CD4-positive, alpha-beta T cell (primary cell): ENCODE measurements at regions of chr6 and their contacts with region 1.

Region 1: GRCh38 chr6:27893059-27893835 is 18.9 kb downstream of the OR2B2 start:
- DNase-seq: peak; percentile 76 to 98 (median 85)
- ATAC-seq: peak; percentile 73
- H3K4me3 ChIP-seq: peak overlapping the region; percentile 74
- H3K4me3 Mint-ChIP-seq: no peak overlapping the region
- H3K27ac ChIP-seq: peak overlapping the region; percentile 84 to 86
- H3K27ac Mint-ChIP-seq: no peak overlapping the region
- H3K4me1 ChIP-seq: peaks cover 49% of the 10 kb centered on the region
- H3K4me1 Mint-ChIP-seq: peaks cover 29% of the 10 kb centered on the region
- H3K27me3 ChIP-seq: no peaks in the 10 kb centered on the region
- H3K27me3 Mint-ChIP-seq: no peaks in the 10 kb centered on the region
- CTCF ChIP-seq: no peak

Region 2: DNA sequence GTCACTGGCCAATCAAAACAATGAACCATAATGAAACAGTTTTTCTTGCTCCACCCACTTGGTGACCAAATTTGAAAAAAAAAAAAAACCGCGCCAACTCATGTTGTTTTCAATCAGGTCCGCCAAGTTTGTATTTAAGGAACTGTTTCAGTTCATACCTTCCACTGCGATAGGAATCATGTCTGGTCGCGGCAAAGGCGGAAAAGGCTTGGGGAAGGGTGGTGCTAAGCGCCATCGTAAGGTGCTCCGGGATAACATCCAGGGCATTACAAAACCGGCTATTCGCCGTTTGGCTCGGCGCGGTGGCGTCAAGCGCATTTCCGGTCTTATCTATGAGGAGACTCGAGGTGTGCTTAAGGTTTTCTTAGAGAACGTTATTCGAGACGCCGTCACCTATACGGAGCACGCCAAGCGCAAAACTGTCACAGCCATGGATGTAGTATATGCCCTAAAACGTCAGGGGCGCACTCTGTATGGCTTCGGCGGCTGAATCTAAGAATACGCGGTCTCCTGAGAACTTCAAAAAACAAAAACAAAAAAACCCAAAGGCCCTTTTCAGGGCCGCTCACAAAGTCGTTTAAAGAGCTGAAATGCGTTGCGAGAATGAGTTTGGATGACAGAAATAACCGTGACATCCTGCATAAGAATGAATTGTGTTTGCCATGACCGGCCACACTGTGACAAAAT is 1789.3 kb before region 1 on chr6:
- CTCF ChIA-PET with region 1: no interaction called
- POLR2A ChIA-PET with region 1: interaction called, 13 read pairs
- intact Hi-C with region 1: no loop called
- DNase-seq: peak; percentile 84 to 96 (median 90)
- ATAC-seq: peak; percentile 88
- H3K4me3 ChIP-seq: peak overlapping the region; percentile 58
- H3K4me3 Mint-ChIP-seq: peak overlapping the region; percentile 94
- H3K27ac ChIP-seq: peak overlapping the region; percentile 83 to 85
- H3K27ac Mint-ChIP-seq: peak overlapping the region; percentile 99
- H3K4me1 ChIP-seq: peaks cover 16% of the 10 kb centered on the region
- H3K4me1 Mint-ChIP-seq: peaks cover 13% of the 10 kb centered on the region
- H3K27me3 ChIP-seq: no peaks in the 10 kb centered on the region
- H3K27me3 Mint-ChIP-seq: peaks cover 5% of the 10 kb centered on the region
- CTCF ChIP-seq: peak; percentile 58

Region 3: DNA sequence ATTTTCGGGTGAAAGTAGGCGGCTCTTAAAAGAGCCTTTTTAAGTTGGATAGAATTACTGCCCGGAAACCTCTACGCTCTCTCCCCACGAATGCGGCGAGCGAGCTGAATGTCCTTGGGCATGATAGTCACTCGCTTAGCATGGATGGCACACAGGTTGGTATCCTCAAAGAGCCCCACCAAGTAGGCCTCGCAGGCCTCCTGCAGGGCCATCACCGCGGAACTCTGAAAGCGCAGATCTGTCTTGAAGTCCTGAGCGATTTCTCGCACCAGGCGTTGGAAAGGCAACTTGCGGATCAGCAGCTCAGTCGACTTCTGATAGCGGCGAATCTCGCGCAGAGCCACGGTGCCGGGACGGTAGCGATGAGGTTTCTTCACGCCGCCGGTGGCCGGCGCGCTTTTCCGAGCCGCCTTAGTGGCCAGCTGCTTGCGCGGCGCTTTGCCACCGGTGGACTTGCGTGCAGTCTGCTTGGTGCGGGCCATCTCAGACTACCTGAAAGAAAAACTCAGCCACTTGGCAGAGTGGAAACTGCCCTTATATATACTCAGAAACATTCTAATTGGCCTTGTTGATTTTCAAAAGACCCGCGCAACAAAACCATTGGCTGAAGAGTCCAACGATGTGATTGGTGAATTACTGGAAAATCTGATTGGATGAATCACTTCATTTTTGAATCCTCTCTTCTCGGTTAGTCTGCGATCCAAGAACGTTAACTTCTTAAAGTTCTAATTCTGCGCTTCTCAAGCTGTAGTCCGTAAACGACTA is 1622.2 kb before region 1 on chr6:
- CTCF ChIA-PET with region 1: no interaction called
- POLR2A ChIA-PET with region 1: interaction called, 33 read pairs
- intact Hi-C with region 1: no loop called
- DNase-seq: peak; percentile 60 to 92 (median 75)
- ATAC-seq: peak; percentile 25
- H3K4me3 ChIP-seq: peak overlapping the region; percentile 59
- H3K4me3 Mint-ChIP-seq: no peak overlapping the region
- H3K27ac ChIP-seq: peak overlapping the region; percentile 82 to 84
- H3K27ac Mint-ChIP-seq: no peak overlapping the region
- H3K4me1 ChIP-seq: peaks cover 28% of the 10 kb centered on the region
- H3K4me1 Mint-ChIP-seq: peaks cover 7% of the 10 kb centered on the region
- H3K27me3 ChIP-seq: no peaks in the 10 kb centered on the region
- H3K27me3 Mint-ChIP-seq: no peaks in the 10 kb centered on the region
- CTCF ChIP-seq: no peak

Region 4: GRCh38 chr6:27177485-27178406 is 715.5 kb before region 1 on chr6:
- CTCF ChIA-PET with region 1: interaction called, 3 read pairs
- POLR2A ChIA-PET with region 1: interaction called, 25 read pairs
- intact Hi-C with region 1: no loop called
- DNase-seq: peak; percentile 44 to 90 (median 64)
- ATAC-seq: peak; percentile 64
- H3K4me3 ChIP-seq: peak overlapping the region; percentile 89
- H3K4me3 Mint-ChIP-seq: peak overlapping the region; percentile 99
- H3K27ac ChIP-seq: peak overlapping the region; percentile 27 to 63
- H3K27ac Mint-ChIP-seq: peak overlapping the region; percentile 100
- H3K4me1 ChIP-seq: peaks cover 21% of the 10 kb centered on the region
- H3K4me1 Mint-ChIP-seq: peaks cover 24% of the 10 kb centered on the region
- H3K27me3 ChIP-seq: no peaks in the 10 kb centered on the region
- H3K27me3 Mint-ChIP-seq: peaks cover 24% of the 10 kb centered on the region
- CTCF ChIP-seq: peak; percentile 54

Region 5: DNA sequence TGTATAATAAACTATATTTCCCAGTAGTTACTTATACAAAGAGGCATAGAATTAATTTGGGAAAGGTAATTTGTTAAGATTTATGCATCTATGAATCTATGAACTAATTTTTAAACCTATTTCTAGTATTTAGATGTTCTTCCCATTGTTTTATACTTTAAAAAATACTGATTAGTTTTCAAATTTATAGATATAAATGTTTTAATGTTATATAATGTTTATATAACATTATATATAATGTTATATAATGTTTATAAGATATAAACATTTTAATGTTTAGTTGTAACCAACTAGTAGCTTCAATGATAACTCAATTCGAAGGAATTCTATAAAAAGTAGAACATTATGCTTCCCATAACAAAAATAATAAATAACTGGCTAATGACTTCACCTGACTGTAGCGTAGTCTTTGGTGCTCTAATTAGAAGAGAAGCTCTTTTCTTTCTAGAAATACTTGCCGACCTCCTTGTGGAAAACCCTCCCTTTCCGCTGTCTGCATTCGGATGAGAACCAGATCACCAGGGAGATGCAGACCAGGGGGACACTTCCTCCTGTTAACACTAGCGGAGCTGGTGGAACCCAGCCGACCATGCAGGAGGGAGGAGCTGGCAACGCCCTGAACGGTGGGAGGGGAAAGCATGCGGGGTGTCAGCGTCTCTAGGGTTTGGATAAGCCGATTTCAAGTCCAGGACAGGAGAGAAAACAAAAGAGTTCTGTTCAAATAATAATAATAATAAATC is 139.4 kb before region 1 on chr6:
- CTCF ChIA-PET with region 1: interaction called, 11 read pairs
- POLR2A ChIA-PET with region 1: interaction called, 55 read pairs
- intact Hi-C with region 1: loop called in 1 of 2 experiments (anchors 1 kb)
- DNase-seq: peak; percentile 31 to 81 (median 54)
- ATAC-seq: peak; percentile 11
- H3K4me3 ChIP-seq: peak overlapping the region; percentile 71
- H3K4me3 Mint-ChIP-seq: peak overlapping the region; percentile 97
- H3K27ac ChIP-seq: no peak overlapping the region
- H3K27ac Mint-ChIP-seq: peak overlapping the region; percentile 98
- H3K4me1 ChIP-seq: peaks cover 22% of the 10 kb centered on the region
- H3K4me1 Mint-ChIP-seq: peaks cover 41% of the 10 kb centered on the region
- H3K27me3 ChIP-seq: no peaks in the 10 kb centered on the region
- H3K27me3 Mint-ChIP-seq: peaks cover 10% of the 10 kb centered on the region
- CTCF ChIP-seq: no peak

Region 6: GRCh38 chr6:27825025-27825793 is 68.0 kb before region 1 on chr6:
- CTCF ChIA-PET with region 1: interaction called, 10 read pairs
- POLR2A ChIA-PET with region 1: interaction called, 635 read pairs
- intact Hi-C with region 1: no loop called
- DNase-seq: peak in 2 of 14 experiments; percentile 27 to 38
- ATAC-seq: no peak
- H3K4me3 ChIP-seq: peak overlapping the region; percentile 82
- H3K4me3 Mint-ChIP-seq: peak overlapping the region; percentile 90
- H3K27ac ChIP-seq: peak overlapping the region; percentile 77 to 87
- H3K27ac Mint-ChIP-seq: peak overlapping the region; percentile 99
- H3K4me1 ChIP-seq: peaks cover 8% of the 10 kb centered on the region
- H3K4me1 Mint-ChIP-seq: peaks cover 38% of the 10 kb centered on the region
- H3K27me3 ChIP-seq: no peaks in the 10 kb centered on the region
- H3K27me3 Mint-ChIP-seq: no peaks in the 10 kb centered on the region
- CTCF ChIP-seq: no peak

Region 7: GRCh38 chr6:27977387-27977786 is 84.1 kb after region 1 on chr6:
- CTCF ChIA-PET with region 1: no interaction called
- POLR2A ChIA-PET with region 1: no interaction called
- intact Hi-C with region 1: no loop called
- DNase-seq: no peak
- ATAC-seq: no peak
- H3K4me3 ChIP-seq: no peak overlapping the region
- H3K4me3 Mint-ChIP-seq: no peak overlapping the region
- H3K27ac ChIP-seq: no peak overlapping the region
- H3K27ac Mint-ChIP-seq: no peak overlapping the region
- H3K4me1 ChIP-seq: no peaks in the 10 kb centered on the region
- H3K4me1 Mint-ChIP-seq: no peaks in the 10 kb centered on the region
- H3K27me3 ChIP-seq: peaks cover 4 to 7% of the 10 kb centered on the region in 2 experiments
- H3K27me3 Mint-ChIP-seq: peaks cover 59% of the 10 kb centered on the region
- CTCF ChIP-seq: no peak

Region 8: DNA sequence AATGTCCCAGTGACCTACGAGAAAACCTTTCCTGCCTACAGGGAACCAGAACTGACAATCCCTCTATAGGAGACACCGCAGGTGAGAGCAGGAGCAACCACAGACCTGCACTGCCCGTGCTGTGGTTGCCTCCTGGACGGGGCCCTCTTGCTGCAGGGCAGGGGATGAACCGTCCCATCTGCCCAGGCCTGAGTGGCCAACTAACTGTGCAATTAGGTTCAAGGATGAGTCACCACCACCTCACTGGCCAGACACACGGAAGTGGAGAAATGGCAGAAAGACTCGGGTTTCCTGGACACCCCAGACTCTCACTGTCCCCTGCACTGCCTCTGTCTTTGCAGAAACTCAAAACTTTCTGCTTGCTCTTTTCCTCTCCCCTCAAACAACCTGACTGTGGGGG is 1920.6 kb after region 1 on chr6:
- CTCF ChIA-PET with region 1: no interaction called
- POLR2A ChIA-PET with region 1: no interaction called
- intact Hi-C with region 1: no loop called
- DNase-seq: no peak
- ATAC-seq: no peak
- H3K4me3 ChIP-seq: no peak overlapping the region
- H3K4me3 Mint-ChIP-seq: no peak overlapping the region
- H3K27ac ChIP-seq: no peak overlapping the region
- H3K27ac Mint-ChIP-seq: no peak overlapping the region
- H3K4me1 ChIP-seq: no peaks in the 10 kb centered on the region
- H3K4me1 Mint-ChIP-seq: no peaks in the 10 kb centered on the region
- H3K27me3 ChIP-seq: peaks cover 0 to 2% of the 10 kb centered on the region in 2 experiments
- H3K27me3 Mint-ChIP-seq: peaks cover 23% of the 10 kb centered on the region
- CTCF ChIP-seq: no peak